SK-N-SH (cell line): ENCODE measurements at regions of chr1 and their contacts with region 1.

Region 1: DNA sequence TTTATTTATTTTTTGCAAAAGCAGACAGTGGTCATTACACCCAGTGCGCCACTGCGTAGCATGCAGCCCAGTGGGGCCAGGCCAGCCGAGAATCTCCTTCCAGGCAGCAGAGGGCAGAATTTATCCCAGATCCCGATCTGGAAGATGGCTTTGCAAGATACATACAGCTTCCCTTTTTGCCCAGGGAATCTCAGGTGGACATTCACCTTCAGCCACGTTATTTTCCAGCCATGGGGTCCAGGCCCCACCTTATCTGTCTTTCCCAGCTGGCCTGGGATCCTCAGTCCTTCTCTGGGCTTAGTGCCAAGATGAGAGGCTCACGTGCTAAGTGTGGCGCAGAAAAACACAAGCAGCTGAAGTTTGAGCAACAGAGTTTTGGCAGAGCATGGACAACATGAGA is 123.6 kb downstream of the AJAP1 start:
- DNase-seq: peak; percentile 69
- H3K4me3 ChIP-seq: no peak overlapping the region
- H3K27ac ChIP-seq: no peak overlapping the region
- H3K4me1 ChIP-seq: peaks cover 0 to 23% of the 10 kb centered on the region in 2 experiments; a peak in 1 of 4 replicates
- H3K27me3 ChIP-seq: no peaks in the 10 kb centered on the region
- CTCF ChIP-seq: no peak
- EP300 ChIP-seq: no peak
- RAD21 ChIP-seq: peak; percentile 56; the same call in 1 of the 2 replicates

Region 2: GRCh38 chr1:4796161-4797015 is 18.3 kb after region 1 on chr1:
- CTCF ChIA-PET with region 1: interaction called, 10 read pairs
- POLR2A ChIA-PET with region 1: interaction called, 3 read pairs
- DNase-seq: no peak
- H3K4me3 ChIP-seq: no peak overlapping the region
- H3K27ac ChIP-seq: no peak overlapping the region
- H3K4me1 ChIP-seq: peaks cover 0 to 24% of the 10 kb centered on the region in 2 experiments; a peak in 1 of 4 replicates
- H3K27me3 ChIP-seq: no peaks in the 10 kb centered on the region
- CTCF ChIP-seq: no peak
- EP300 ChIP-seq: no peak
- RAD21 ChIP-seq: no peak

Region 3: GRCh38 chr1:4825800-4826450 is 47.9 kb after region 1 on chr1:
- CTCF ChIA-PET with region 1: interaction called, 19 read pairs
- POLR2A ChIA-PET with region 1: no interaction called
- DNase-seq: peak; percentile 58
- H3K4me3 ChIP-seq: no peak overlapping the region
- H3K27ac ChIP-seq: no peak overlapping the region
- H3K4me1 ChIP-seq: no peaks in the 10 kb centered on the region; a peak in 1 of 4 replicates
- H3K27me3 ChIP-seq: no peaks in the 10 kb centered on the region
- CTCF ChIP-seq: no peak
- EP300 ChIP-seq: no peak
- RAD21 ChIP-seq: peak; percentile 73